ENCODE measurements at regions of chr15 and their contacts with region 1.

Region 1: GRCh38 chr15:78691167-78691872 is 50.3 kb upstream of the CHRNB4 start:
- DNase-seq: no peak
- ATAC-seq: no peak
- H3K4me3 ChIP-seq: no peak overlapping the region
- H3K27ac ChIP-seq: no peak overlapping the region
- H3K4me1 ChIP-seq: no peaks in the 10 kb centered on the region
- H3K27me3 ChIP-seq: no peaks in the 10 kb centered on the region
- CTCF ChIP-seq: no peak

Region 2: GRCh38 chr15:77944002-77944867 is 747.1 kb before region 1 on chr15:
- intact Hi-C with region 1: loop called in 1 of 2 experiments (anchors 5 kb)
- DNase-seq: peak; percentile 89 to 93
- ATAC-seq: peak; percentile 89 to 98 (median 93)
- H3K4me3 ChIP-seq: peak overlapping the region; percentile 73
- H3K27ac ChIP-seq: peak overlapping the region; percentile 80
- H3K4me1 ChIP-seq: no peaks in the 10 kb centered on the region
- H3K27me3 ChIP-seq: no peaks in the 10 kb centered on the region
- CTCF ChIP-seq: no peak

Region 3: GRCh38 chr15:78778422-78778821 is 87.1 kb after region 1 on chr15:
- intact Hi-C with region 1: no loop called
- DNase-seq: no peak
- ATAC-seq: peak in 1 of 4 donors; percentile 9
- H3K4me3 ChIP-seq: no peak overlapping the region
- H3K27ac ChIP-seq: no peak overlapping the region
- H3K4me1 ChIP-seq: peaks cover 6% of the 10 kb centered on the region
- H3K27me3 ChIP-seq: no peaks in the 10 kb centered on the region
- CTCF ChIP-seq: no peak